ENCODE measurements at regions of chr1 and their contacts with region 1.

Region 1: GRCh38 chr1:111656086-111657017 is 36.8 kb downstream of the RAP1A start:
- DNase-seq: peak; percentile 14
- H3K4me3 ChIP-seq: no peak overlapping the region
- H3K27ac ChIP-seq: no peak overlapping the region
- H3K4me1 ChIP-seq: peaks cover 5% of the 10 kb centered on the region
- H3K27me3 ChIP-seq: no peaks in the 10 kb centered on the region
- CTCF ChIP-seq: peak; percentile 36 to 72 (median 54)
- POLR2A ChIP-seq: no peak

Region 2: DNA sequence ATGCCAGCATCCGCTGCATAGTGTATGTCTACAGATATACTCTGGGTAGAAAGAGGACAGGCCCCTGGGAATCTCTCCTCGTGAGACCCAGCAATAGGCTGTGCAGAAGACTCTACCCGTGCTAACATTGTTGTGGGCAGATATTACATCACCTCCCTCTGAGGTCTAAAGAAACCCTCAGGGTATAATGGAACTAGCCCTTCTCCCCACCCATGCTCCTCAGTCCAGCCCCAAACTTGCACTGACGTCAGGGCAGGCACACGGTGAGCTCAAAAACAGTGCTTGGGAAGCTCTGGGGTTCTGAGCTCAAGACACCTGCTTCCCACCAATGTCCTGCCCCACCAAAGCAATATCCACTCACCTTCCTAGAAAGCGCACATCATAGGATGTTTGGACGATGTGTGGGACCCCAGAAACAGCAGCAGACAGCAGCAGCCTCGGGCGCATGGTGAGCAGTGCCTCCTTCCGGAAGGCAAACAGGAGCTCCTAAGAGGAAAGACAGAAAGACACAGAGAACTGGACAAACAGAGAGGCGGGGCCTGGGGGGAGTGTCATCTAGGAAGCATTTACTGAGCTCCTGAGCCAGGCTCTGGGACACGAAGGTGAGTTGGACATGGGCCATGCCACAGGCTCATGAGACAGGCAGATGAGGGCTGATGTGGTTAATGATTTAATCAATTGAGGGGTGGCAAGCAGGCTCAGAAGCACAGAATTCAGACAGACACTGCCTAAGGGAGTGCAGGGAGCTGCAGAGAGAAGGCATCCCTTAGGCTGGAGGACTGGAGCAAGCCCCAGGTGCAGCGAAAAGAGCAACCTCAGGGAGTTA is 233.6 kb before region 1 on chr1:
- intact Hi-C with region 1: no loop called
- DNase-seq: peak; percentile 26
- H3K4me3 ChIP-seq: no peak overlapping the region
- H3K27ac ChIP-seq: no peak overlapping the region
- H3K4me1 ChIP-seq: no peaks in the 10 kb centered on the region
- H3K27me3 ChIP-seq: no peaks in the 10 kb centered on the region
- CTCF ChIP-seq: no peak
- POLR2A ChIP-seq: no peak

Region 3: DNA sequence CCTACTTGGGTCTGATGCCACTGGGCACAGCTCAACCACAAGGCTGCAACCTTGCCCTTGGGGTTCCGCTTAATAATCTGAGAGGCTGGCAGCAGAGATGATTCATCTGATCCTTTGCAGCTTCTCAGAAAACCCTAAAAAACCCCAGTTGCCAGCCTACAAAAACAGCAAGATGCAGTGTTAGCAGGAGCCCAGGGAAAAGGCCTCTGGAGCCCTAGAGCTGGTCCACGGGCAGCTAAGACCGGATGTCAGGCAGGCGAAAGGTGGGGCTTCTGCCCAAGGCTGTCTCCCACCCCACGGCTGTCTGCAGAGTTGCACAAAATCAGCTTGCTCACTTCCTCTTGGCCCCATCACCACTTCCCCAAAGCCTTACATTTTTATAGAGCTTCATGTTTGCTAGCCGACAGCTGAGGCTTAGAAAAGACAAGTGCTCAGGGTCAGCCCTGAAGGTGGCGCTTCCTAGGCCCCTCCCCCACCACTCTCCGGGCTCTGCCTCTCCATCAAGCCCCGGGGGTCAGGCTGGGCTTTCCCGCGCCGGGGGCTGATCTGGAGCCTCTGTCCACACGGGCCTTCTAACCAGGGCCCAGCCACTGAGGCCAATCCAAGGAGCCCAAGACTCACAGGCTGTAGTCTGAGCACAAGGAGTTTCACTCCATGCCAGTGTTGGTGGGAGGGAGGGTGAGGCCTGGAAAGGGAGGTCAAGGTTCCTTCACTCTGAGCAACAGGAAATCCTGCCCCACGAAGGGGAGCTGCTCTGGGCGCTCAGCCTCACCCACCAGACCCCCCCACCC is 148.7 kb before region 1 on chr1:
- intact Hi-C with region 1: loop called (anchors 2 kb)
- DNase-seq: peak; percentile 35
- H3K4me3 ChIP-seq: no peak overlapping the region
- H3K27ac ChIP-seq: peak overlapping the region; percentile 84 to 90
- H3K4me1 ChIP-seq: peaks cover 9% of the 10 kb centered on the region
- H3K27me3 ChIP-seq: no peaks in the 10 kb centered on the region
- CTCF ChIP-seq: peak in 1 of 4 experiments; percentile 4
- POLR2A ChIP-seq: no peak

Region 4: GRCh38 chr1:111570781-111571181 is 85.6 kb before region 1 on chr1:
- intact Hi-C with region 1: no loop called
- DNase-seq: no peak
- H3K4me3 ChIP-seq: no peak overlapping the region
- H3K27ac ChIP-seq: no peak overlapping the region
- H3K4me1 ChIP-seq: no peaks in the 10 kb centered on the region
- H3K27me3 ChIP-seq: no peaks in the 10 kb centered on the region
- CTCF ChIP-seq: peak in 1 of 4 experiments; percentile 24
- POLR2A ChIP-seq: no peak

Region 5: DNA sequence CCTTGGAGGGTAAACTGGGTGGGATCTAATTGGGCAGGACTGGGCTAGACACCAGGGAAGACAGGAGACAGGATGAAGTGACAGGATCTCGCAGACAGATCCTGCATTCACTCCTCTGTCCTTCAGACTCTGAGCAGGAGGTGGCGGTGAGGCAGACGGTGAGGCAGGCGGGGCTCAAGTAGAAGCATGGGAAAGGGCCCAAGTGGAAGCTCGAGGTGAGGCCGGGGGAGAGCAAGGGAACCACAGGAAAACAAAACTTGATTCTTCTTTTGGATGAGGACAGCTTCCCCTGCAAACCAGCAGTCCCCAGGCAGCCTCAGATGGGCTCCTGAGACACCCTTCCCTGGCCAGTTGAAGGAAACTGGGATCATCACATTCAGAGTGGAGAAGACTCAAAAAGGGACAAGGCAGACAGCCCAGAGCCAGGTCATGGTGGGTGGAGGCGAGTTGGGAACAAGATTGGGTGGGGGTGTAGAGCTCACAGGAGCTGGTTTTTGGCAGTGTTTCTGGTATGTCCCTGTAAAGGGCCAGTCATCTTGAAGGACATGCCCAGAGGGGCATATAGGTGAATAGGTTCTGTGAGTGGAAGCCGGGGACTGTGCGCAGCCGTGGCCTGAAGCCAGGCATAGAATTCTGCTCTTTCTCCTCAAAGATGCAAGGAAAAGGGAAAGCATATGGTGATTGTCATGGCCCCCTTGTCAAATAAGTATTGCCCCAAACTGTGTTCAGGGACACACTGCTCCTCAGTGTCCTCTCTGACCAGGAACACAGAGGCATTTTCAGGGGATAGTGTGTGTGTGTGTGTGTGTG is 64.8 kb after region 1 on chr1:
- intact Hi-C with region 1: no loop called
- DNase-seq: no peak
- H3K4me3 ChIP-seq: no peak overlapping the region
- H3K27ac ChIP-seq: no peak overlapping the region
- H3K4me1 ChIP-seq: no peaks in the 10 kb centered on the region
- H3K27me3 ChIP-seq: no peaks in the 10 kb centered on the region
- CTCF ChIP-seq: no peak
- POLR2A ChIP-seq: no peak

Region 6: DNA sequence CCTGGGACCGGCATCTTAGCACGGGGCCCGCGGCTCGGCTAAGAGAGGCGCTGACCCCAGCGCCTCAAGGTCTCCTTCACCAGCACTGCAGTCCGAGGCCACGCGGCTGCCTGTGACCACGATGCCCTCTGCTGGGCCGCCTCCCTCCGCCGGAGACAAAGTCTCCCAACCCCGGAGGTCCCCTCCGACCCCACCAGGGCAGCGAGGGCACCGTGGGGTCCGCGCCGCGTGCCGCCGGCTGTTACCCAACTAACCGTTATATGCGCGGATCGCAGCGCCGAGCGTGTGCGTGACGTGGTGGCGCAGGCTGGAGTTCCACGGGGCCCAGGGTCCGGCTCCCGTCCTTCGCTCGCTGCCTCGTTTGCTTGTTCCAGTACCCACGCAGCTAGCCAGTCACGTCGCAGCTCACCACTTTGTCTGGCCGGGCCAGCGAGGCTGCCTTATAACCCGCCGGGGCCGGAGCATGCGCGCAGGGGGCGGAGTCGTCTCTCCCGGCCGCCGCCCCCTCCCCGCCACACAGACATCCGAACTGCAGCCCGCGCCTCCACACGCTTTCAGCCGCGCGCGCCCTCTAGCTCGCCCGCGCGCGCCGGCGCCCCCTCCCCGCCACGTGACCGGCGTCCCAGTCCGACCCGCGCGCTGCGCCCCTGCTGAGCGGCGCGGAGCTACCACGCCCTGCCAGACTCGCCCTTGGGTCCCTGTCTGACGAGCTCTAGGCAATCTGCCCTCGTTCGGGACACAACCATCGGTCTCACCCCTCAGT is 1299.6 kb after region 1 on chr1 and contains the start of gene SLC16A1:
- intact Hi-C with region 1: no loop called
- DNase-seq: peak; percentile 91
- H3K4me3 ChIP-seq: peak within 1 kb of the TSS; percentile 56 to 80
- H3K27ac ChIP-seq: peak within 1 kb of the TSS; percentile 80 to 85
- H3K4me1 ChIP-seq: peaks cover 3% of the 10 kb centered on the region
- H3K27me3 ChIP-seq: no peaks in the 10 kb centered on the region
- CTCF ChIP-seq: peak; percentile 10 to 34 (median 23)
- POLR2A ChIP-seq: peak; percentile 82
- total RNA-seq, gene SLC16A1: 14.6 to 110 TPM